ENCODE measurements at regions of chr6 and their contacts with region 1.

Region 1: GRCh38 chr6:20846602-20847028 is 312.4 kb downstream of the CDKAL1 start:
- DNase-seq: no peak
- H3K4me3 Mint-ChIP-seq: no peak overlapping the region
- H3K27ac Mint-ChIP-seq: no peak overlapping the region
- H3K4me1 Mint-ChIP-seq: peaks cover 32% of the 10 kb centered on the region
- H3K27me3 Mint-ChIP-seq: no peaks in the 10 kb centered on the region

Region 2: GRCh38 chr6:20366091-20366832 is 480.4 kb before region 1 on chr6:
- intact Hi-C with region 1: no loop called
- DNase-seq: peak; percentile 34
- H3K4me3 Mint-ChIP-seq: peak overlapping the region; percentile 64
- H3K27ac Mint-ChIP-seq: peak overlapping the region; percentile 93
- H3K4me1 Mint-ChIP-seq: peaks cover 64% of the 10 kb centered on the region
- H3K27me3 Mint-ChIP-seq: no peaks in the 10 kb centered on the region

Region 3: DNA sequence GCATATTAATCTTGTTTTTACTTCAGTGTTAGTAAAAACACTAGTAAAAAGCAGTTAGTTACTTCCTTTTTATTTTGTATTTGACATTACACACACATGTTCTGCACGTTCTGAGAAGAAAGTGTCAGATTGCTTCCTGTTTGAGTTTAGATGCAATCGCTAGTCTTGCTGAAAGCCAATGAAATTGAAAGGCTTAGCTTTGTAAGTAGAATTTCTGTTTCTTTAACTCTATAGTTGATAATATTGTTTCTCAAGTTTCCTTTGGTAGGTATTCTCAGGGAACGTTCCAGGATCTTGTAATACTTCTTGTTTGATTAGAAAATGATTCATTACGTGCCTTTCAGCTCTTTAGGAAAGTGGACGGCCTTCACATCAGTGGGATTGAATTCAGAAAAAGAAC is 257.3 kb before region 1 on chr6:
- intact Hi-C with region 1: loop called (anchors 10 kb)
- DNase-seq: no peak
- H3K4me3 Mint-ChIP-seq: no peak overlapping the region
- H3K27ac Mint-ChIP-seq: no peak overlapping the region
- H3K4me1 Mint-ChIP-seq: peaks cover 26% of the 10 kb centered on the region
- H3K27me3 Mint-ChIP-seq: no peaks in the 10 kb centered on the region

Region 4: DNA sequence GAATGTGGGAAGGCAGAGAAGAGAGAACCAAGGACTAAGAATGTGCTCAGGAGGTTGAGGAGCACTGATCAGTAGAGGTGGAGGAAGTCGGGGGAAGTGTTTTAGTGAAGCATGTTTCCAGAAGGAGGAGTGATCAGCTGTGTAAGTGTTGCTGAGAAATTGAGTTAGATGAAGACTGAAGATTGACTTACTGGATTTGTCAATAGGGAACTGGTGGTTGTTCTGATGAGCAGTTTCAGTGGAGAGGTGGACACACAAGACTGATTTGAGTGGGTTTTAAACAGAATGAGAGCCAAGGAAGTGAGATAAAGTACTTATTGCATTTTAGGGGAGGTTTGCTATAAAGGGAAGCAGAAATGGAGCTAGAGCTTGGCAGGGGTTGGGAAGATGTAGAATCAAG is 129.8 kb before region 1 on chr6:
- intact Hi-C with region 1: loop called (anchors 10 kb)
- DNase-seq: no peak
- H3K4me3 Mint-ChIP-seq: no peak overlapping the region
- H3K27ac Mint-ChIP-seq: no peak overlapping the region
- H3K4me1 Mint-ChIP-seq: peaks cover 26% of the 10 kb centered on the region
- H3K27me3 Mint-ChIP-seq: no peaks in the 10 kb centered on the region

Measured in activated T-helper 2 cell treated with anti-CD3 and anti-CD28 coated beads, Interferon-gamma antibody, Interleukin-2, Interleukin-4, amounts not matched to agents 10 μg/mL and 5 μg/mL and 100 μg/mL, durations not matched to agents 14 hours and 24 hours and 36 hours (primary cell).